ENCODE measurements at regions of chr12 and their contacts with region 1.

Region 1: DNA sequence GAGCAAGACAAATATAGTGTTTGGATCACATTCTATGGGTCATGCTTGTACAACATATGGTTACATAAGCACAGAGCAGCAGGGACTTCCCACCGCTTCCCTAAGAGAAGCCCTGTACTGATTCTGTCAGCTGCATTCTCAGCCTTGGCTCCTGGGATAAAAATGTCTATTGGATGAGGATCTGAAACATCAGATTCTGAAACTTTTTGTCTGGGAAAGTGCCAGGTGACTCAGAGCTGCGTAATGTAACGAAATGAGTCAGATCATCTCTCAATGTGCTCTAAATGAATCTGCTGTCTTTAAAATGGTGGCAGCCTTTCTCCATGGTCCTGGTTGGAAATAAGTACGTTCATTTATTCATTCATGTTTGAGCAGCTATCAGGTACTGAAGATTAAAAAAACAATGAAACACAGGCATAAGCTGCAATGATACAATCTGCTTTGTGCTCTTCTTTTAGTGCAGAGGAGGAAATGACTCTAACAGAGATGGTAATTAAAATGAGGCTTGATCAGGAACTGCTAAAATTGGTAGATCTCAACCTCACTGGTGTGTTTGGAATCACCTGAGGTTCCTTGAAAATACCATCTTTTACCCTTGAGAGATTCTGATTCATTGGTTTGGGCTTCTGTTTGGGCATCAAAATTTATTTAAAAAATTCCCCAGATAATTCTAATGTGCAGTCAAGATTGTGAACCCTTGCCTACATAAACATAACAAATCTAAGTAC is 99.1 kb upstream of the NAP1L1 start:
- DNase-seq: peak; percentile 81
- H3K4me3 Mint-ChIP-seq: no peak overlapping the region
- H3K27ac Mint-ChIP-seq: no peak overlapping the region
- H3K4me1 Mint-ChIP-seq: peaks cover 12% of the 10 kb centered on the region
- H3K27me3 Mint-ChIP-seq: peaks cover 56% of the 10 kb centered on the region

Region 2: DNA sequence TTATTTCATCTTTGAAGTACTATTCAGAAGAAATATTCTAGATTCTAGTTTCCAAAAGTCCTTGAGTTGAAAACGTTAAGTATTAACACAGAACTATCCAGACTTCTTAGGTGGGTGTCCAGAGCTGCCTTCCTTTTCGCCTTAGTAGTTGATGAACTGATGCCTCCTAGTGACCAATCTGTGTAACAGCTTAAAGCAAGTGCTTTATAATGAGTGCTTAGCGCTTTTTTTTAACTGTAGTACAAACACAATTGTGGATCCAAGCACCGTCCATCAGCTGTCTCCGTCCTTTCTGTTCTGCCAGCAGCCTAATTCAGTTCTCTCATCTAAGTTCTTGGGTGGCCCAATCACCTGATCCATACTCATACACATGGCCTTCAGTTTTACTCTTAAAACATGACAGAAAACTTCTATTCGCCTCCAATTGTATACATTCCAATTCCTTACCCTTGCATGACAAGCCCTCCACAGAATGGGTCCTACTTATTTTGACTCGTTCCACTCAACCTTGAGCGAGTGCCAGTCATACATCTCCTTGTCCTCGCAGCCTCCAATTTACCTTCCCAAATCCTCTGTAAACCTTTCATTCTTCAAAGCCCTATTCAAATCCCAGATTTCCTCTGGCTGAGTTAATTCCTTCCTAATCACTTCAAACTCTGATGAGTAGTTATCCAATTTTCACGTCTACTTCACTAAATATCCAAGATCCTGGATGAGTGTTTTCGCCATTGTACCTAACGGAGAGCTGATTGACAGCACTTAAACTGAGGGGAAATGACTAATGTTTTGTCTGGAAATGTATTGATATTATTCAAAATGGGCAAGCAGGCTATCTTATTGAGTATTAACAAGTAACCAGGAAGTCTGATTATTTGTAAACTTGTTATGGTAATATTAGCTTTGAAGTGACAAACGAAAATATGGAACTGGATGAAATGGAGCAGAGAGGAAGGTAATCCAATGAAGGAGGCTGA is 146.2 kb before region 1 on chr12:
- CTCF ChIA-PET with region 1: no interaction called
- POLR2A ChIA-PET with region 1: no interaction called
- intact Hi-C with region 1: no loop called
- DNase-seq: no peak
- H3K4me3 Mint-ChIP-seq: no peak overlapping the region
- H3K27ac Mint-ChIP-seq: no peak overlapping the region
- H3K4me1 Mint-ChIP-seq: peaks cover 19% of the 10 kb centered on the region
- H3K27me3 Mint-ChIP-seq: no peaks in the 10 kb centered on the region

Region 3: DNA sequence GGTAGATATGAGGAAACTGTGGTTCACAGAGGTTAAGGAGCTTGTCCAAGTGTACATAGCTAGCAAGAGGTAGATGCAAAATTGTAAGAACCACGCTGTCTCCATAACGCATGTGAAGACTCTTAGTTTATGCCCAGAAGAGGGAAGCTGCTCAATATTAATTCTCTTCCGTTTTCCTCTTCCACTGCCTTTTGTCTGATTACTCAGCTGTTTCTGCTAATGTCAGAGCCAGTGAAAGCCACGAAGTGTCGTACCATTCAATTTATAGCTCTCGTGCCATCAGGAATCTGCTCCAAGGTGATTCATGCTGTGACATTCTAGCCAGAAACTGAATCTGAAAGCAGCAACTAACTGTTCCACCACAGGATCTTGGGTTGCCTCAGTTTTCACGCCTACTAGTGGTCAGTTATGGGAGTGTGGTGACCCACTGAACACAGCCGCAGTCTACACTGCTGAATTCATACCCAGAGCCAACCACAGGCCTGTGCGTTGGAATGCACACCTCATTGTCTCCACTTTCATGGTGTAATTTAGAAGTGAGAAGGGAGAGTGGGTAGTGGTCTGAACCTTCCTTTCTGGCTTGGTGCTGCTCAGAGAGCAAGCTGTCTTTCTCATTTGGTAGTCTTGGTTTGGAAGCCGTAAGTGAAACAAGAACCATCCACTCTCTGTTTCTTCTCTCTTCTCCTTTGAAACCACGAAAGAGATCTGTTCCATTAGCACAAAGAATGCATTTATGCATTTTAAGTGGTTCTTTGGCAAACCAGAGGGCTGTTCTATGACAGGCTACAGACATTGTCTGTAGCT is 24.9 kb before region 1 on chr12:
- CTCF ChIA-PET with region 1: interaction called, 15 read pairs
- POLR2A ChIA-PET with region 1: interaction called, 8 read pairs
- intact Hi-C with region 1: loop called (anchors 1 kb)
- DNase-seq: peak; percentile 91
- H3K4me3 Mint-ChIP-seq: peak overlapping the region; percentile 16
- H3K27ac Mint-ChIP-seq: peak overlapping the region; percentile 25
- H3K4me1 Mint-ChIP-seq: peaks cover 16% of the 10 kb centered on the region
- H3K27me3 Mint-ChIP-seq: peaks cover 12% of the 10 kb centered on the region

Region 4: DNA sequence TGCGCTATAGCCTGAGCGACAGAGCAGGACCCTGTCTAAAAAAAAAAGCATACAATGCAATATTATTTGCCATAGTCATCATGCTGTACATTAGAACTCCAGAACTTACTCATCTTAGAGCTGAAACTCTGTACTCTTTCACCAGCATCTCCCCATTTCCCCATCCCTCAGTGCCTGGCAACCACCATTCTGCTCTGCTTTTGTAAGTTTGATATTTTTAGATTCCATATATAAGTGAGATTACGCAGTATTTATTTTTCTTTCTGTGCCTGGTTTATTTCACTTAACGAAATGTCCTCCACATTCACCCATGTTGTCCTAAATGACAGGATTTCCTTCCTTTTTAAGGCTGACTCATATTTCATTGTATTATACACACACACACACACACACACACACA is 42.8 kb after region 1 on chr12:
- CTCF ChIA-PET with region 1: no interaction called
- POLR2A ChIA-PET with region 1: no interaction called
- intact Hi-C with region 1: no loop called
- DNase-seq: no peak
- H3K4me3 Mint-ChIP-seq: no peak overlapping the region
- H3K27ac Mint-ChIP-seq: no peak overlapping the region
- H3K4me1 Mint-ChIP-seq: no peaks in the 10 kb centered on the region
- H3K27me3 Mint-ChIP-seq: peaks cover 1% of the 10 kb centered on the region

Region 5: DNA sequence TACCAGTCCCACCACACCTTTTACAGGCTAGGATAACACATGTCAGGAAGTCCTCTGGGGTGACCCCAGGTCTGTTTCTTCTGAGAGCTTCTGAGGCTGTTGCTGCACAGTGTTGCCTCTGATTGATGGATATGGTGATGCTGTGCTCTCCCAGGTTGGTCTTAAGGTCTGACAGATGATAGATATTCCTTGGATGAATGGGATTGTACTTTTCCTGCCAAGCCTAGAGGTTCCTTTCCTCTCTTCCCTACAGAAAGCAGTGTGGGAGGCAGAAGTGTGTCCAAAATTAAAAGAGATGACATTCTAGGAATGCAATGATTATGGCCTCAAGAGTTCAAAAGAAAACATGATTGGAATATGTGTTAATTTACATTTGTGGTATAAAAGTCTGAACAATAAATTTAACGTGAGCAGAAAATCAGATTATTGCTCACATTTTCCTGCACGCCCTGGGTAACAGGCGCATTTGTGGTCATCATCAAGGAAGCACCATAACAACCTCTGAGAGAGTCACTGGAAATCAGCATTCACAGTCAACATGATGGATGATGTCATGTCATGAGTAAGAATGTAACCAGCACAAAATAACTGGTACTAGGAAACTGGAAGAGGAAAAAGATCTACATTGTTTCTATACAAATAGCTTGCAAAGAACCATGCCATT is 90.9 kb after region 1 on chr12:
- CTCF ChIA-PET with region 1: no interaction called
- POLR2A ChIA-PET with region 1: interaction called, 4 read pairs
- intact Hi-C with region 1: loop called (anchors 1 kb)
- DNase-seq: peak; percentile 59
- H3K4me3 Mint-ChIP-seq: no peak overlapping the region
- H3K27ac Mint-ChIP-seq: no peak overlapping the region
- H3K4me1 Mint-ChIP-seq: peaks cover 12% of the 10 kb centered on the region
- H3K27me3 Mint-ChIP-seq: peaks cover 14% of the 10 kb centered on the region

Measured in activated CD4-positive, alpha-beta memory T cell treated with anti-CD3 and anti-CD28 coated beads for 36 hours (primary cell).